Heart right ventricle (tissue), 16 donors: ENCODE measurements at regions of chr7 and their contacts with region 1.

Region 1: DNA sequence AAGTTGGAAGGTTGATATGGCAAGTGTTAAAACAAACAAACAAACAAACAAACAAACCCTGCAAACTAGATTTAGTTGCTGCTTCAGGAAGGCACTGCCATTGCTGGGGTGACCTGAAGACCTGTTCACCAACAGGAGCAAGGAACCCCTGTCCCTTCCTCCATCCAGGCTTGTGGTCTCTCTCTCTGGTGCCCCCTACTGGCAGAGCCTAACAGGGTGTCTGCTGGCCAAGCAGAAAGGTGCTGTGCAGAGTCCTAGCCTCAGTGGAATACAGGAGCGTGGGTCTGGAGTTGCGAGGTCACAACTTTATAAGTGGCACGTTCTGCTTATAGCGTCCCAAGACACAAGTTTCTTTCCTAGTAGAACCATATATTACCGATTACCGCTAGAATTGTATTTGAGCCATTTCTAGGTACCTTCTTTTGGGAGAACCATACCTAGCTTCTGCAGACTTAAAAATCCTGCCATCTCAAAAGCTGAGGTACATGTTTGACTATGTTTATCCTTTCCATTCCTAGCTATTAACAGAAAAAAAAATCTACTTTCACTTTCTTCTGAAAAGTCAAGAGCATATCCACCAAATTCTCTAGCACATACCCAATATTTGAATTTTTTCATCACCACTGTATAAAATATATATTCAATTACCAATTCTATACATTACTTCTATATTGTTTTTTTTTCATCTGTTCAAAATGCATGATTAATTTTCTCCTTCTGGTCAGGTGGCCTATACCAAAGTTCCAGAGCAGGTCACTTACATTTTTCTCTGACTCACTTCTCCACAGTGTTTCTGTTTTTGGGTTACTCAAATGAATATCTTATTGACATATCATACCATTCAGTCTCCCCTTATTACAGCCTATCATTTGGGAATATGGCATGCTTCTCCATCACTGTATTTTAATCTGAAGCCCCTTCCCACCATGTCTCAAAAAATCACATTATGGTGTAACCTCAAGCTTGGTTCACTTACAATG is 29.1 kb upstream of the CALD1 start:
- DNase-seq: peak; percentile 27 to 49
- ATAC-seq: peak; percentile 45 to 78 (median 59)
- H3K4me3 ChIP-seq: peak overlapping the region in 1 of 10 donors; percentile 7
- H3K27ac ChIP-seq: no peak overlapping the region
- H3K4me1 ChIP-seq: peaks cover 0 to 6% (median 0%) of the 10 kb centered on the region in 9 donors
- H3K27me3 ChIP-seq: no peaks in the 10 kb centered on the region
- CTCF ChIP-seq: peak; percentile 54 to 77 (median 66)

Region 2: GRCh38 chr7:134701272-134701671 is 49.1 kb before region 1 on chr7:
- intact Hi-C with region 1: loop called in 3 of 10 experiments (anchors 5 to 10 kb)
- DNase-seq: no peak
- ATAC-seq: no peak
- H3K4me3 ChIP-seq: no peak overlapping the region
- H3K27ac ChIP-seq: no peak overlapping the region
- H3K4me1 ChIP-seq: peaks cover 0 to 11% (median 0%) of the 10 kb centered on the region in 9 donors
- H3K27me3 ChIP-seq: no peaks in the 10 kb centered on the region
- CTCF ChIP-seq: peak in 4 of 9 donors; percentile 26 to 44 (median 30)

Region 3: GRCh38 chr7:134943764-134944400 is 193.5 kb after region 1 on chr7:
- intact Hi-C with region 1: loop called in 2 of 10 experiments (anchors 10 kb)
- DNase-seq: no peak
- ATAC-seq: peak in 3 of 8 donors; percentile 53 to 60 (median 56)
- H3K4me3 ChIP-seq: no peak overlapping the region
- H3K27ac ChIP-seq: peak overlapping the region in 2 of 10 donors; percentile 16 to 17
- H3K4me1 ChIP-seq: peaks cover 0 to 22% (median 17%) of the 10 kb centered on the region in 9 donors
- H3K27me3 ChIP-seq: no peaks in the 10 kb centered on the region
- CTCF ChIP-seq: peak in 7 of 9 donors; percentile 34 to 66 (median 51)